WTC11 (cell line): ENCODE measurements at regions of chr3 and their contacts with region 1.

Region 1: DNA sequence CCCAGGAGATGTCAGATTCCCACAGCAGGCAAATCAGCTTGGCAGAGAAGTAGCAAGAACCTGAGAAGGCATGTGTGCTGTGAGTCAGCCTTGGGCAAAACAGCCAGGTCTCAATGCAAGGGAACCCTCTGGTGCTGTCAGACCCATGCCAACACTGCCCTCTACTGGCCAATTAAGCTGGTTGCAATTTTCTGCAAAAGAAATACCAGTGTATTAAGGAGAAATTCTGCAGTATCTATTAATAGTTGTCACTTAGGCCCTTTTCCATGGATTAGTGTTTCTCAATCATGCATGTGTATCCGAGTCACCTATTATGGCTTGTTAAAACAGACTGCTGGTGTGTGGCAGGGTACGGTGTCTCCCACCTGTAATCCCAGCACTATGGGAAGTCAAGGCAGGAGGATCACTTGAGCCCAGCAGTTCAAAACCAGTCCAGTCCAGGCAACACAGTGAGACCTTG is 26.2 kb downstream of the MAP4 start:
- DNase-seq: peak; percentile 67
- ATAC-seq: peak; percentile 97
- H3K4me3 Mint-ChIP-seq: no peak overlapping the region
- H3K27ac Mint-ChIP-seq: peak overlapping the region; percentile 38; the same call in 1 of the 2 replicates
- H3K4me1 Mint-ChIP-seq: peaks cover 14% of the 10 kb centered on the region
- H3K27me3 Mint-ChIP-seq: no peaks in the 10 kb centered on the region
- CTCF ChIP-seq: peak; percentile 94

Region 2: GRCh38 chr3:47849699-47850563 is 140.1 kb before region 1 on chr3:
- CTCF ChIA-PET with region 1: interaction called, 12 read pairs
- POLR2A ChIA-PET with region 1: no interaction called
- DNase-seq: no peak
- ATAC-seq: peak; percentile 25
- H3K4me3 Mint-ChIP-seq: no peak overlapping the region
- H3K27ac Mint-ChIP-seq: peak overlapping the region; percentile 64
- H3K4me1 Mint-ChIP-seq: no peaks in the 10 kb centered on the region
- H3K27me3 Mint-ChIP-seq: no peaks in the 10 kb centered on the region
- CTCF ChIP-seq: peak; percentile 29; the same call in 1 of the 2 replicates

Region 3: DNA sequence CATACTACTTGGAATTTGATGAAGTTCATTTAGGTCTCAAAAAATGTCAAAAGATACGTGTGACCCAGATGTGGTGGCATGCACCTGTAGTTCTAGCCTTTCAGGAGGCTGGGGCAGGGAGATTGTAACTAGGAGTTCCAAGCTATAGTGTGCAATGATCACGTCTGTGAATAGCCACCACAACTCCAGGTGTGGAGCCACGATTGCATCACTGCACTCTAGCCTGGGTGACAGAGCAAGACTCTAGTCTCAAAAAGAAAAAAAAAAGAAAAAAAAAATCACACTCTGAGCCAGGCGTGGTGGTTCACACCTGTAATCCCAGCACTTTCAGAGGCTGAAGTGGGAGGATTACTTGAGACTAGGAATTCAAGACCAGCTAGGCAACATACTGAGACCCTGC is 12.0 kb after region 1 on chr3:
- CTCF ChIA-PET with region 1: interaction called, 15 read pairs
- POLR2A ChIA-PET with region 1: no interaction called
- DNase-seq: no peak
- ATAC-seq: no peak
- H3K4me3 Mint-ChIP-seq: no peak overlapping the region
- H3K27ac Mint-ChIP-seq: 0 out of 2 replicates have a peak overlapping the region, but pooled peaks have one; percentile 15
- H3K4me1 Mint-ChIP-seq: peaks cover 21% of the 10 kb centered on the region
- H3K27me3 Mint-ChIP-seq: no peaks in the 10 kb centered on the region
- CTCF ChIP-seq: no peak

Region 4: GRCh38 chr3:48077815-48078214 is 87.8 kb after region 1 on chr3:
- CTCF ChIA-PET with region 1: no interaction called
- POLR2A ChIA-PET with region 1: no interaction called
- DNase-seq: no peak
- ATAC-seq: no peak
- H3K4me3 Mint-ChIP-seq: no peak overlapping the region
- H3K27ac Mint-ChIP-seq: 0 out of 2 replicates have a peak overlapping the region, but pooled peaks have one; percentile 14
- H3K4me1 Mint-ChIP-seq: peaks cover 6% of the 10 kb centered on the region
- H3K27me3 Mint-ChIP-seq: no peaks in the 10 kb centered on the region
- CTCF ChIP-seq: no peak